ENCODE measurements at regions of chr13 and their contacts with region 1.

Region 1: GRCh38 chr13:76885203-76886004 is 801 bp downstream of the KCTD12 start:
- DNase-seq: no peak
- ATAC-seq: peak; percentile 79
- H3K4me3 ChIP-seq: peak overlapping the region; percentile 46 to 53
- H3K27ac ChIP-seq: no peak overlapping the region
- H3K4me1 ChIP-seq: no peaks in the 10 kb centered on the region
- H3K27me3 ChIP-seq: 0 out of 2 replicates have a peak, but pooled peaks cover 2% of the 10 kb centered on the region
- CTCF ChIP-seq: peak; percentile 59

Region 2: DNA sequence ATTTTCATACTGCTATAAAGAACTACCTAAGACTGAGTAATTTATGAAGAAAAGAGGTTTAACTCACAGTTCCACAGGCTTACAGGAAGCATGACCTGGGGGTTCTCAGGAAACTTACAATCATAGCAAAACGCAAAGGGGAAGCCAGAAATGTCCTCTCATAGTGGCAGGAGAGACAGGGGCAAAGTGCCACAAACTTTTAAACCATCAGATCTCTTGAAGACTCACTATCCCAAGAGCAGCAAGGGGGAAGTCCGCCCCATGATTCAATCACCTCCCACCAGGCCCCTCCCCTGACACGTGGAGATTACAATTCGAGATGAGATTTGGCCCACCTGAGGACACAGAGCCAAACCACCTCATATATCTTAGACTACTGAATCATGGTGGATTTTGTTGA is 197.9 kb before region 1 on chr13:
- CTCF ChIA-PET with region 1: no interaction called
- POLR2A ChIA-PET with region 1: no interaction called
- in situ Hi-C with region 1: no loop called
- intact Hi-C with region 1: no loop called
- DNase-seq: no peak
- ATAC-seq: no peak
- H3K4me3 ChIP-seq: no peak overlapping the region
- H3K27ac ChIP-seq: no peak overlapping the region
- H3K4me1 ChIP-seq: no peaks in the 10 kb centered on the region
- H3K27me3 ChIP-seq: no peaks in the 10 kb centered on the region
- CTCF ChIP-seq: no peak

Region 3: DNA sequence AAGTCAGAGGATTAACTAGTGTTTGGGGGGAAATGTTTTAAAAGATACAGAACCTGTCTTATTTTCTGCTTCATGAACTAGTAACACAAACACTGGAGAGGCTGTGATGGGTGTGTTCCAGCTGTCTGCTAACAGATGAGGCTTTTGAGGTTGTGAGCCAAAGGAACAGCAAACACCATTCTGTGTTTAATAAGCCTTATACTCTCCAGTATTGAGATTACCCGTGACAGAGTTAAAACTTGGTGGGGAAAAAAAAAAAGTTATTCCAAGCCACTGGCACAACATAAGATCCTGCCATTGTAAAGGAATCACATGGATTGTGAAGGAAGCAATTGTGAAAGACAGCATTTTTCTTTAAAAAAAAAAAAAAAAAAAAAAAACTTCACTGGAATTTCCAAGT is 47.6 kb before region 1 on chr13:
- CTCF ChIA-PET with region 1: no interaction called
- POLR2A ChIA-PET with region 1: no interaction called
- in situ Hi-C with region 1: no loop called
- intact Hi-C with region 1: no loop called
- DNase-seq: no peak
- ATAC-seq: no peak
- H3K4me3 ChIP-seq: no peak overlapping the region
- H3K27ac ChIP-seq: no peak overlapping the region
- H3K4me1 ChIP-seq: no peaks in the 10 kb centered on the region
- H3K27me3 ChIP-seq: no peaks in the 10 kb centered on the region
- CTCF ChIP-seq: no peak

Region 4: DNA sequence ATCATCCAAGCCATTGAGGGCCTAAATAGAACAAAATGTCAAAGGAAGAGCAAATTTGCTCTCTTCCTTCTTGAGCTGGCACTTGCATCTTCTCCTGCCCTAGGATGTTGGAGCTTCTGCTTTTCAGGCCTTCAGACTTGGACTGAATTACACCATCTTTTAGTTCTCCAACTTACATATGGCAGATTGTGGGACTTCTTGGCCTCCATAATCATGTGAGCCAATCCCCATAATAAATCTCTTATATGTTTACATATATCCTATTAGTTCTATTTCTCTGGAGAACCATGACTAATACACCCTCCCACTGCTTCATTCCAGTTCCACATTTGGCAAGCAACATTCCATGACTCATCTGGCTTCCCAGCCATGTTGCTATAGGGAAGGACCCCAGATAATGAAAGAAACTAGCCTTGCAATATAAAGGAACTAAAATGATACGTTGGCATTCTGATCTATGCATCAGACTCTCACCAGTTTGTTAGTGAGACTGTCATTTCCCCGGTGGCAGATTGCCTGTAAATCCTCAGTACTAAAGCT is 51.9 kb after region 1 on chr13:
- CTCF ChIA-PET with region 1: no interaction called
- POLR2A ChIA-PET with region 1: interaction called, 11 read pairs
- in situ Hi-C with region 1: no loop called
- intact Hi-C with region 1: no loop called
- DNase-seq: no peak
- ATAC-seq: no peak
- H3K4me3 ChIP-seq: no peak overlapping the region
- H3K27ac ChIP-seq: no peak overlapping the region
- H3K4me1 ChIP-seq: no peaks in the 10 kb centered on the region
- H3K27me3 ChIP-seq: no peaks in the 10 kb centered on the region
- CTCF ChIP-seq: no peak

Region 5: GRCh38 chr13:76958841-76959432 is 73.5 kb after region 1 on chr13:
- CTCF ChIA-PET with region 1: no interaction called
- POLR2A ChIA-PET with region 1: no interaction called
- in situ Hi-C with region 1: no loop called
- intact Hi-C with region 1: no loop called
- DNase-seq: no peak
- ATAC-seq: no peak
- H3K4me3 ChIP-seq: no peak overlapping the region
- H3K27ac ChIP-seq: no peak overlapping the region
- H3K4me1 ChIP-seq: no peaks in the 10 kb centered on the region
- H3K27me3 ChIP-seq: no peaks in the 10 kb centered on the region
- CTCF ChIP-seq: no peak

Measured in Panc1 (cell line).